ENCODE measurements at regions of chr20 and their contacts with region 1.

Region 1: GRCh38 chr20:63707549-63708300 is at the starts of genes ARFRP1 and ZGPAT:
- DNase-seq: peak; percentile 87
- H3K4me3 Mint-ChIP-seq: peak within 1 kb of the TSS; percentile 87
- H3K27ac Mint-ChIP-seq: peak within 1 kb of the TSS; percentile 60
- H3K4me1 Mint-ChIP-seq: peaks cover 36% of the 10 kb centered on the region
- H3K27me3 Mint-ChIP-seq: no peaks in the 10 kb centered on the region
- total RNA-seq, gene ARFRP1: 59.0 and 59.1 TPM in 2 replicates
- total RNA-seq, gene ZGPAT: 29.0 and 36.1 TPM in 2 replicates

Region 2: DNA sequence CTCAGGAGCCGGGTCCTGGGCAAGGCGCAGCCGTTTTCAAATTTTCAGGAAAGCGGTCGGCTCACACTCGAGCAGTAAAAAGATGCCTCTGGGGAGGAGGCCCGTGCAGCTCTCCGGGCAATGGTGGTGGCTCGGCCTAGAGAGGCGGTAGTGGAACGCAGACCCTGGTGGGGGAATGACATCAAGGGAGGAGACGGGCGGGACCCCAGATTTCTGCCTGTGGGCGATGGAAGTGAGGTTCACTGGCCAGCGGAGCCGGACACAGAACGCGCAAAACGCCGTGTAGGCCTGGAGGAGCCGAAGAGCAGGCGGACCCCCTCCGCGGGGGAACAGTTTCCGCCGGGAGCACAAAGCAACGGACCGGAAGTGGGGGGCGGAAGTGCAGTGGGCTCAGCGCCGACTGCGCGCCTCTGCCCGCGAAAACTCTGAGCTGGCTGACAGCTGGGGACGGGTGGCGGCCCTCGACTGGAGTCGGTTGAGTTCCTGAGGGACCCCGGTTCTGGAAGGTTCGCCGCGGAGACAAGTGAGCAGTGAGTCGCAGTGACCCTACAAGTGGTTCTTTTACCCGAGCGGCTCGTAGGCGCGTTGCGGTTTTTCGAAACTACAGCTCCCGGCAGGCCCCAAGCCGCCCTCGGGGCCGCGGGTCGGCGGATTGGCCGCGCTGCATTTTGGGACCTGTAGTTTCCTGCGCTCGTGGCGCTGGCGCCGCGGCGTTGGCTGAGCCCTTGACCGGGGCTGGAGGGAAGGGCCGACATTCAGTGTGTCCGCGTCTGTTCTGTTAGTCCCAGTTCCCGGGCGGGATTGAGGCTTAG is 49.6 kb before region 1 on chr20 and contains the start of gene RTEL1:
- intact Hi-C with region 1: loop called (anchors 1 kb)
- DNase-seq: peak; percentile 87
- H3K4me3 Mint-ChIP-seq: peak within 1 kb of the TSS; percentile 92
- H3K27ac Mint-ChIP-seq: peak within 1 kb of the TSS; percentile 86
- H3K4me1 Mint-ChIP-seq: peaks cover 18% of the 10 kb centered on the region
- H3K27me3 Mint-ChIP-seq: peaks cover 4% of the 10 kb centered on the region
- total RNA-seq, gene RTEL1: 44.0 and 46.9 TPM in 2 replicates

Region 3: GRCh38 chr20:63739130-63740069 is 31.7 kb after region 1 on chr20 and contains the start of gene SLC2A4RG:
- intact Hi-C with region 1: loop called (anchors 5 kb)
- DNase-seq: peak; percentile 72
- H3K4me3 Mint-ChIP-seq: peak within 1 kb of the TSS; percentile 13
- H3K27ac Mint-ChIP-seq: no peak within 1 kb of the TSS
- H3K4me1 Mint-ChIP-seq: peaks cover 12% of the 10 kb centered on the region
- H3K27me3 Mint-ChIP-seq: no peaks in the 10 kb centered on the region
- total RNA-seq, gene SLC2A4RG: 48.3 and 53.0 TPM in 2 replicates

Region 4: DNA sequence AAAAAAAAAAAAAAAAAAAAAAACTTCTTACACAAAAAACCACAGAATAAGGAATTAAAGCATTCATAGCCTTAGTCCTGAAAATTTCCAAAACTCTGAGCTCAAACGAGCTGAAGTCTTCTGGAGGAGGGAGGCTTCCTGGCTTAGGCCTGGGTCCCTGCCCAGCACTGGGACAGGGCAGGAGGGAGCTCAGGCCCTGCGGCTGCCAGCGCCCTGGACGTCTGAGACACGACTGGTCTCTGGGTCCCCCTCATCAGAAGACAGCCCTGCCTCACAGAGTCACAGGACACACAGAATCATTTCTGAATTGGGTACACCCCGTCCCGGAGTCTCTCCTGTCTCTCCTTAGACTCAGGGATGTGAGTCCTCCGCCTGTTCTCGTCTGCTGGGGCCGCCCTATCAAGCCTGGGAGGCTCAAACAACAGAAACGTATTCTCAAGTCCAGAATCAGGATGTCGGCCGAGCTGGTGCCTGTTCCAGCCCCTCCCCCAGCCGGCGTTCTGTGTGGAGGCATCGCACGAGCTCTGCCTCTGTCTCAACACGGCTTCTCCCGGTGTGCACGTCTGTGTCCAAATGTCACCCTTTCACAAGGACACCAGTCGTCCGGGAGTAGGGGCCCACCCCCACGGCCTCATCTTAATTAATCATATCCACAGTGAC is 83.9 kb after region 1 on chr20:
- intact Hi-C with region 1: loop called (anchors 1 kb)
- DNase-seq: no peak
- H3K4me3 Mint-ChIP-seq: no peak overlapping the region
- H3K27ac Mint-ChIP-seq: no peak overlapping the region
- H3K4me1 Mint-ChIP-seq: no peaks in the 10 kb centered on the region
- H3K27me3 Mint-ChIP-seq: peaks cover 13% of the 10 kb centered on the region

Region 5: DNA sequence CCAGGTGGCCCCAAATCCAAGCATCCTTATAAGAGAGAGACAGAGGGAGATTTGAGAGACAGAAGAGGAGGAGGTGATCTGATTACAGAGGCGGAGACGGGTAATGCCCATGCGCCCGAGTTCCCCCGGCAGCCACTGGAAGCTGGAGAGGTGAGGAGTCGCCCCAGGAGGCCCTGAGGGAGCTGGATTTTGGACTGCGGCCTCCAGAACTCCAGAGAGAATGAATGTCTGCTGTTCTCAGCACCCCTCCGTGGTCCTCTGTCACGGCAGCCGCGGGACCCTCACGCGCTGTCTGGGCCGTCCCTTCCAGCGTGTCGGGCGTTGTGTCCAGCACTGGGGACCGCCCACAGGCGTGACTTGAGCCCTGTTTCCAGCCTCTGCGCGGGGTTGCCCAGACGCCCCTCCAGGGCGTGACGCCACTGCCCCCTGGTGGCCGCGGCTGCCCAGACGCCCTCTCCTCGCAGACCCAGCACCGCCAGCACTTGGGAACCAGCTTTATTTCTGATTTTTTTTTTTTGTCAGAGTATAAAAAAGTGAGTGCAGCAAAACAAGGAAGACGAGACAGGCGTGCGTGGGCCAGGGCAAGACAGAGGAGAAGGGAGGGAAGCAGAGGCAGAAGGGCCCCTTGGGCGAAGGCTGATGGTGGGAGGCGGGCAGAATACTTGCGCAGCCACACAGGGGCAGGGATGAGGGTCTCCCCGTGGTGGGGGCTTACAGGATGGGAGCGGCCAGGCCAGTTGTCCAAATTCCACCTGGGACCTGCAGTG is 266.1 kb after region 1 on chr20:
- intact Hi-C with region 1: loop called (anchors 10 kb)
- DNase-seq: peak; percentile 66
- H3K4me3 Mint-ChIP-seq: no peak overlapping the region
- H3K27ac Mint-ChIP-seq: no peak overlapping the region
- H3K4me1 Mint-ChIP-seq: peaks cover 36% of the 10 kb centered on the region
- H3K27me3 Mint-ChIP-seq: no peaks in the 10 kb centered on the region

Measured in activated T-helper 2 cell treated with anti-CD3 and anti-CD28 coated beads, Interferon-gamma antibody, Interleukin-2, Interleukin-4, amounts not matched to agents 10 μg/mL and 5 μg/mL and 100 μg/mL, durations not matched to agents 14 hours and 24 hours and 36 hours (primary cell).